Motor neuron (in vitro differentiated cells): ENCODE measurements at regions of chr5 and their contacts with region 1.

Region 1: GRCh38 chr5:173293817-173294672 is 34.2 kb downstream of the STC2 start:
- ATAC-seq: peak; percentile 80 to 97 (median 86)
- H3K4me3 ChIP-seq: no peak overlapping the region
- H3K27ac ChIP-seq: no peak overlapping the region
- H3K4me1 ChIP-seq: peaks cover 30 to 54% of the 10 kb centered on the region in 2 donors

Region 2: GRCh38 chr5:173094012-173094661 is 199.9 kb before region 1 on chr5:
- in situ Hi-C with region 1: no loop called
- ATAC-seq: peak in 3 of 8 experiments; percentile 92 to 93 (median 93)
- H3K4me3 ChIP-seq: no peak overlapping the region
- H3K27ac ChIP-seq: no peak overlapping the region
- H3K4me1 ChIP-seq: no peaks in the 10 kb centered on the region

Region 3: DNA sequence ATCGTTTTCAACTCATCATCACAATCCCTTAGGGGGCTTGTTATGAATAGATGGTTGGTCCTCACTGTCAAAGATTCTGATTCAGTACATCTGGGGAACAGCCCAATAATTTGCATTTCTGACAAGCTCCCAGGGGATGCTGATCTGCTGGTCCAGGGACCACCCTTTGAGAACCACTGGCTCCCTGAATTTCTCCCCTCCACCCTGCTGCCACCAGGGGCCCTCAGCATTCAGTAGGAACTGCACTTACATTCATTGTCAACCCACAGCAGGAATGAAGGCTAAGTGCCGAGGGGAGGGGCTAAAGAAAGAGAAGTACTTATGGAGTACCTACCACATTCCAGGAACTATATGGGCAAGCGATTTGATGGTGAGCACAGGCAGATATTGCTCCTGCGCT is 236.5 kb after region 1 on chr5:
- in situ Hi-C with region 1: no loop called
- ATAC-seq: peak in 1 of 8 experiments; percentile 50
- H3K4me3 ChIP-seq: no peak overlapping the region
- H3K27ac ChIP-seq: no peak overlapping the region
- H3K4me1 ChIP-seq: no peaks in the 10 kb centered on the region

Region 4: GRCh38 chr5:173573126-173573960 is 279.3 kb after region 1 on chr5:
- in situ Hi-C with region 1: loop called in 2 of 9 experiments (anchors 10 to 25 kb)
- ATAC-seq: peak; percentile 86 to 100 (median 96)
- H3K4me3 ChIP-seq: peak overlapping the region in 1 of 5 donors; percentile 22
- H3K27ac ChIP-seq: no peak overlapping the region
- H3K4me1 ChIP-seq: no peaks in the 10 kb centered on the region

Region 5: GRCh38 chr5:173581408-173582215 is 287.6 kb after region 1 on chr5:
- in situ Hi-C with region 1: loop called in 2 of 9 experiments (anchors 10 to 25 kb)
- ATAC-seq: peak in 3 of 8 experiments; percentile 44 to 57 (median 51)
- H3K4me3 ChIP-seq: no peak overlapping the region
- H3K27ac ChIP-seq: no peak overlapping the region
- H3K4me1 ChIP-seq: no peaks in the 10 kb centered on the region